ENCODE measurements at regions of chr17 and their contacts with region 1.

Region 1: GRCh38 chr17:75034236-75034908 is 12.4 kb downstream of the ATP5PD start:
- DNase-seq: peak; percentile 89 to 94 (median 92)
- ATAC-seq: peak; percentile 73 to 79
- H3K4me3 ChIP-seq: peak overlapping the region; percentile 67
- H3K27ac ChIP-seq: peak overlapping the region; percentile 80
- H3K4me1 ChIP-seq: peaks cover 3% of the 10 kb centered on the region
- H3K27me3 ChIP-seq: no peaks in the 10 kb centered on the region

Region 2: GRCh38 chr17:74987418-74987908 is 46.9 kb before region 1 on chr17 and contains the start of gene CDR2L:
- intact Hi-C with region 1: loop called in 1 of 4 experiments (anchors 10 kb)
- DNase-seq: peak; percentile 98 to 100 (median 99)
- ATAC-seq: peak; percentile 91 to 94
- H3K4me3 ChIP-seq: peak within 1 kb of the TSS; percentile 85
- H3K27ac ChIP-seq: peak within 1 kb of the TSS; percentile 93
- H3K4me1 ChIP-seq: peaks cover 12% of the 10 kb centered on the region
- H3K27me3 ChIP-seq: no peaks in the 10 kb centered on the region
- total RNA-seq, gene CDR2L: 11.0 to 17.5 (median 14.2) TPM

Region 3: GRCh38 chr17:75087558-75088453 is 53.4 kb after region 1 on chr17 and contains the start of gene SLC16A5:
- intact Hi-C with region 1: no loop called
- DNase-seq: peak; percentile 92 to 97 (median 97)
- ATAC-seq: peak; percentile 90 to 94
- H3K4me3 ChIP-seq: peak within 1 kb of the TSS; percentile 30
- H3K27ac ChIP-seq: peak within 1 kb of the TSS; percentile 88
- H3K4me1 ChIP-seq: peaks cover 6% of the 10 kb centered on the region
- H3K27me3 ChIP-seq: no peaks in the 10 kb centered on the region
- total RNA-seq, gene SLC16A5: 12.7 to 21.6 (median 18.5) TPM

Measured in right cardiac atrium (tissue), 5 donors.